Activated B cell treated with CpG ODN at 0.5 μM for 24 hours (primary cell): ENCODE measurements at regions of chr16 and their contacts with region 1.

Region 1: GRCh38 chr16:68520649-68521086 is 18.4 kb upstream of the ZFP90 start:
- DNase-seq: peak; percentile 69
- ATAC-seq: peak; percentile 98
- H3K4me3 Mint-ChIP-seq: peak overlapping the region; percentile 52
- H3K27ac Mint-ChIP-seq: peak overlapping the region; percentile 12
- H3K4me1 Mint-ChIP-seq: peaks cover 14% of the 10 kb centered on the region
- H3K27me3 Mint-ChIP-seq: no peaks in the 10 kb centered on the region
- CTCF ChIP-seq: peak; percentile 77

Region 2: DNA sequence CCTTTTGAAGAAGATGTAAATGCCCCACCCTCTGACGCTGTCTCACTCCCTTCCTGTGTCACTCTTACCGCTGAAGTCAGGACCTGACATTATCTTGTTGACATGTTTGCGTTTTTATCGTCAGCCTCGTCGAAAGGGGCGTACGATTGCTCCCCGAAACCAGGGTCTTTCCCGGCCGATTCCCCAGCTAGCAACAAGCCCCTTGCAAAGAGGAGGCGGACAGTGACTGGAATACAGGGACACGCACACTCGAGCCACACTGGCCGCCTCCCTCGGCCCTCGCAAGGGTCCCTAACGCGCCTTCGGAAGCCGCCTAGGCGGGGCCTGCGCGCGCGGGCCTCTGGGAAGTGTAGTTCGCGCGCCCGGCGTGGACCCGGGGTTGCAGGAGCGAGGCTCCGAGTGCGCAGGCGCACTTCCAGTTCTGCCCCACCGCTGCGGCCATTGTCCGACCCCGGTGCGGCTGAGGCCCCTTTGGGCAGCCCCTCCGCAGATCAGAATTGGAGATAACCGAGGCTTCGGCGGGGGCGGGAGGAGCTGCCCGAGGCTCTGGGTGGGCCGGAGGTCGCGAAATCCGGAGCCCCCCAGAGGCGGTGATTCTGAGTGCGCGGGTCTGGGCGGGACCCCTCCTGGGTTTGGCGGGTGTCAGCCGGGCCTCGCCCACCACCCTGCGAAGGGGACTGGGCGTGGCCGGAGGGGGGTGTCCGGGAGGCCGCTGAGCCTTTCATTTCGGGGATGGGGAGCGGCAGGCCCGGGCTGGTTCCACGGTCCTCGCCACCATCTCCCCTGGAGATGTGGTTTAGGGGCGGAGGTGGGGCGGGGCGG is 18.4 kb after region 1 on chr16 and contains the start of gene ZFP90:
- CTCF ChIA-PET with region 1: interaction called, 3 read pairs
- POLR2A ChIA-PET with region 1: no interaction called
- intact Hi-C with region 1: loop called (anchors 2 kb)
- DNase-seq: peak; percentile 87
- ATAC-seq: peak; percentile 97
- H3K4me3 Mint-ChIP-seq: peak within 1 kb of the TSS; percentile 93
- H3K27ac Mint-ChIP-seq: peak within 1 kb of the TSS; percentile 93
- H3K4me1 Mint-ChIP-seq: peaks cover 14% of the 10 kb centered on the region
- H3K27me3 Mint-ChIP-seq: no peaks in the 10 kb centered on the region
- CTCF ChIP-seq: no peak
- total RNA-seq, gene ZFP90: 18.8 and 25.1 TPM in 2 replicates

Region 3: DNA sequence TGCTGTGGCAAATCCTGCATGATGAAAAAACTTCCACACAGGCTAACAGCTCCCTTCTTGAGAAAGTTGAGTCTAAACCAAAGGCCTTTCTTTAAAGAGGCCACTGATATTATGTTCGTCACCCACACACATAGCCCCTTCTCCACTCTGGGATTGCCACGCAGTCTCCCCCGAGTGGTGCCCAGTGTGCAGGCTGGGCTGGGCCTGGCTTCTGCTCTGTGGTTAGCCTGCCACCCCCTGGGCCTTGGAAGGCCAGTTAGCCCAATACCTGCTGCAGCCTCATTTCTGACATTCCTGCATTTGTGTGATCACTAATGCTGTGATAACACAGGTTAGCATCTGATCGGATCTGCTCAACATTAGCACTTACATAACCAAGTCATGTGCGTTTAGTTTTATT is 169.3 kb after region 1 on chr16:
- CTCF ChIA-PET with region 1: no interaction called
- POLR2A ChIA-PET with region 1: no interaction called
- intact Hi-C with region 1: no loop called
- DNase-seq: no peak
- ATAC-seq: no peak
- H3K4me3 Mint-ChIP-seq: no peak overlapping the region
- H3K27ac Mint-ChIP-seq: no peak overlapping the region
- H3K4me1 Mint-ChIP-seq: no peaks in the 10 kb centered on the region
- H3K27me3 Mint-ChIP-seq: peaks cover 4% of the 10 kb centered on the region
- CTCF ChIP-seq: no peak